ENCODE measurements at regions of chr10 and their contacts with region 1.

Region 1: DNA sequence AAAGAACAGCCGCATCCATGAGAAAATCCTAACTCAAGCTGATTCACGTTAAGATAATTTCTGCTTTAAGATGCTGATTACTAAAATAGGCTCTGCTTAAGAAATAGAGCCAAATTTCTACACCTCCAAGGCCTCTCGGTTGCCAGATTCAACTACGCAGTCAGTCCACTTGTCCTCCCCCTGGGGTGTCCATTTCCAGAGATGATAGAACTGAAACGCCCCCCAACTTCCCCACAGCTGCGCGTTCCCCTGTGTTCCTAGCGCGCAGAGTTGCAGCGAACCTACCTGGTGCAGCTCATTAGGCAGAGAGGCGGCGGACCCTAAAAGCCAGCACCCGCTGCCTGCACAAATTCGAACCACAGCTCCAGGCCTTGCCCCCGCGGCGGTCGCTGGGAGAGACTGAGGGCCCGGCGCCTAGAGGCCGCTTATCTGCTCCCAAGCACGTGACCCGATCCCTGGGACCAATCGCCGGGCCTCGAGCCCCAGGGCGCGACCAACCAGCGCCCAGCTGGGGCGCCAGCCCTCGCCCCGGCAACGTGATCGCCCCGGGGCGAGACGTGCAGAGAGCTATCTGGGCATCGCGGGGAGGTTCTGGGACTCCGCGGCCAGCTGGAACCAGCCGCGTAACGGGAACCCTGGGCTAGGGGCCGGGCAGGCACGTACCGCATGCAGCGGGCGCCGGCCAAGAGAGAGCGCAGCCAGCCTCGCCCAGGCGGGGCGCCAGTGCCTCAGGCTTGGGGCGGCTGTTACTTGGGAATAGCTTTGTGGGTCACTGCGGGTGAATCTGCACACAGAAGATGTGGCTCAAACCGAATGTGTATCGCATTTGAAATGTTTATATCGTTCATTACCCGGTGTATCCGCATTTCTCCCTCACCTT is at the start of gene PPP1R3C:
- DNase-seq: peak; percentile 86 to 89 (median 88)
- H3K4me3 ChIP-seq: peak within 1 kb of the TSS; percentile 67
- H3K27ac ChIP-seq: peak within 1 kb of the TSS; percentile 61 to 71
- H3K4me1 ChIP-seq: peaks cover 3% of the 10 kb centered on the region
- H3K27me3 ChIP-seq: no peaks in the 10 kb centered on the region
- CTCF ChIP-seq: peak; percentile 16 to 41 (median 31)
- EP300 ChIP-seq: no peak
- POLR2A ChIP-seq: peak; percentile 70
- total RNA-seq, gene PPP1R3C: 2.9 to 37.3 (median 16.7) TPM

Region 2: GRCh38 chr10:91389636-91390512 is 243.0 kb before region 1 on chr10:
- intact Hi-C with region 1: loop called in 2 of 4 experiments (anchors 10 kb)
- DNase-seq: no peak
- H3K4me3 ChIP-seq: no peak overlapping the region
- H3K27ac ChIP-seq: no peak overlapping the region
- H3K4me1 ChIP-seq: no peaks in the 10 kb centered on the region
- H3K27me3 ChIP-seq: no peaks in the 10 kb centered on the region
- CTCF ChIP-seq: peak in 2 of 3 donors; percentile 57 to 69
- EP300 ChIP-seq: no peak
- POLR2A ChIP-seq: no peak

Region 3: DNA sequence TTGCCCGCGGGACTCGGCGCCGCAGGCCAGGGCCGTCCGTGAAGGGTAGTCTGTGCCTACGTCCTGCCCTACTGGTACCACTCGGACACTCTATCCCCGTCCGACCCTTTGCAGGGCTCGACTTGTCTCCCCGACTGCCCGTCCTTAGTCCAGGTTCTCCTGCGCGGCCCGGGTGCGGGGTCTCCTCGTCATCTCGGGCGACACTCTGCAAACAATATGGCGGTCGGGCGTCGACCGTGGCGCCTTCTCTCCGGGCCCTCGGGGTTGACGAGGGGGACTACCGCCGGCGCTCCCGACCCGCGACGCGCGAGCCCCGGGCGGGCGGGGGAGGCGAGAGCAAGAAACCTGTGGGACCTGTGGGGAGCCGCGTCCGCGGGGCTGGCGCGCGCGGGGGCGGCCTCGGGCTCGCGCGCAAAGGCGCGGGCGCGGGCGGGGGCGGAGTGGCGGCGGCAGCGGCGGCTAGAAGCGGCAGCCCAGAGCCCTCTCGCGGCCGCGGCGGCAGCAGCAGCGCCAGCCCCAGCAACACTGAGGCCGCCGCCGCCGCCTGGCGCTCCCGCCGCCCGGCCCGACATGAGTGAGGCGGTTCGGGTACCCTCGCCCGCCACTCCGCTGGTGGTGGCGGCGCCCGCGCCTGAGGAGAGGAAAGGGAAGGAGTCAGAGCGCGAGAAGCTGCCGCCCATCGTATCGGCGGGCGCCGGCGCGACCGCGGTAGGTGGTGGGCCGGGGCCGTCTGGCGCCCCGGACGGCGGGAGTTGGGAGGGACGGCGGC is 222.9 kb before region 1 on chr10 and contains the start of gene HECTD2:
- intact Hi-C with region 1: loop called in 2 of 4 experiments (anchors 5 kb)
- DNase-seq: peak; percentile 80 to 91 (median 86)
- H3K4me3 ChIP-seq: peak within 1 kb of the TSS; percentile 83
- H3K27ac ChIP-seq: peak within 1 kb of the TSS; percentile 100
- H3K4me1 ChIP-seq: peaks cover 1% of the 10 kb centered on the region
- H3K27me3 ChIP-seq: no peaks in the 10 kb centered on the region
- CTCF ChIP-seq: peak in 2 of 3 donors; percentile 53 to 77
- EP300 ChIP-seq: no peak
- POLR2A ChIP-seq: peak; percentile 50
- total RNA-seq, gene HECTD2: 16.5 to 22.3 (median 20.2) TPM

Region 4: DNA sequence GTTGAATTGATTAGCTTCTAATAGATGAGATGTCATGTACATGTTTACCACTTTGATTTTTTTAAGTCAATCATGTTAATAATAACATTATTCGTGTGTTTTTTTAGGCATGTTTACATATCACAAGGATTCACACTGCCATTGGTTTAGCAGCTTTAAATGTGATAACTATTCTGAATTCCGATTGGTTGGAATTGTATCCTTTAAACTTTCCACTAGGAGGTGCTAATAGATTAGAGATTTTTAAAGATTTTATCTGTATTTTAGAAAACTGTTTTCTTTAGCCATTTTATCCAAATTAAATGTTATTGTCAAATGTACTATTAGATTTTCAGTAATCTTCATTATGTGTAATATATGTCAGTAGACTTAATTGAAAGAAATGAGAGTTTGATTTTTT is 139.6 kb before region 1 on chr10:
- intact Hi-C with region 1: loop called (anchors 5 to 10 kb)
- DNase-seq: no peak
- H3K4me3 ChIP-seq: no peak overlapping the region
- H3K27ac ChIP-seq: no peak overlapping the region
- H3K4me1 ChIP-seq: no peaks in the 10 kb centered on the region
- H3K27me3 ChIP-seq: no peaks in the 10 kb centered on the region
- CTCF ChIP-seq: peak in 2 of 3 donors; percentile 25 to 52
- EP300 ChIP-seq: no peak
- POLR2A ChIP-seq: no peak

Region 5: GRCh38 chr10:91838199-91838598 is 205.3 kb after region 1 on chr10:
- intact Hi-C with region 1: no loop called
- DNase-seq: no peak
- H3K4me3 ChIP-seq: no peak overlapping the region
- H3K27ac ChIP-seq: no peak overlapping the region
- H3K4me1 ChIP-seq: peaks cover 3% of the 10 kb centered on the region
- H3K27me3 ChIP-seq: no peaks in the 10 kb centered on the region
- CTCF ChIP-seq: no peak
- EP300 ChIP-seq: no peak
- POLR2A ChIP-seq: no peak